ENCODE measurements at regions of chr17 and their contacts with region 1.

Region 1: GRCh38 chr17:49191917-49192741 is 18.2 kb downstream of the GNGT2 start:
- DNase-seq: peak; percentile 93
- ATAC-seq: peak; percentile 31
- H3K4me3 Mint-ChIP-seq: peak overlapping the region; percentile 90
- H3K27ac Mint-ChIP-seq: peak overlapping the region; percentile 97
- H3K4me1 Mint-ChIP-seq: peaks cover 31% of the 10 kb centered on the region
- H3K27me3 Mint-ChIP-seq: no peaks in the 10 kb centered on the region

Region 2: GRCh38 chr17:48830840-48831548 is 361.1 kb before region 1 on chr17 and contains the start of gene CALCOCO2:
- CTCF ChIA-PET with region 1: no interaction called
- POLR2A ChIA-PET with region 1: no interaction called
- intact Hi-C with region 1: loop called in 1 of 2 experiments (anchors 2 kb)
- DNase-seq: peak; percentile 95
- ATAC-seq: peak; percentile 91
- H3K4me3 Mint-ChIP-seq: peak within 1 kb of the TSS; percentile 84
- H3K27ac Mint-ChIP-seq: peak within 1 kb of the TSS; percentile 96
- H3K4me1 Mint-ChIP-seq: peaks cover 45% of the 10 kb centered on the region
- H3K27me3 Mint-ChIP-seq: no peaks in the 10 kb centered on the region
- total RNA-seq, gene CALCOCO2: 66.7 to 102 TPM

Region 3: GRCh38 chr17:49170216-49170615 is 21.9 kb before region 1 on chr17:
- CTCF ChIA-PET with region 1: no interaction called
- POLR2A ChIA-PET with region 1: no interaction called
- intact Hi-C with region 1: no loop called
- DNase-seq: no peak
- ATAC-seq: no peak
- H3K4me3 Mint-ChIP-seq: no peak overlapping the region
- H3K27ac Mint-ChIP-seq: no peak overlapping the region
- H3K4me1 Mint-ChIP-seq: no peaks in the 10 kb centered on the region
- H3K27me3 Mint-ChIP-seq: peaks cover 34% of the 10 kb centered on the region

Region 4: GRCh38 chr17:49180303-49180702 is 11.8 kb before region 1 on chr17:
- CTCF ChIA-PET with region 1: interaction called, 10 read pairs
- POLR2A ChIA-PET with region 1: no interaction called
- intact Hi-C with region 1: no loop called
- DNase-seq: peak; percentile 80
- ATAC-seq: peak; percentile 58
- H3K4me3 Mint-ChIP-seq: no peak overlapping the region
- H3K27ac Mint-ChIP-seq: no peak overlapping the region
- H3K4me1 Mint-ChIP-seq: peaks cover 4% of the 10 kb centered on the region
- H3K27me3 Mint-ChIP-seq: peaks cover 1% of the 10 kb centered on the region

Region 5: DNA sequence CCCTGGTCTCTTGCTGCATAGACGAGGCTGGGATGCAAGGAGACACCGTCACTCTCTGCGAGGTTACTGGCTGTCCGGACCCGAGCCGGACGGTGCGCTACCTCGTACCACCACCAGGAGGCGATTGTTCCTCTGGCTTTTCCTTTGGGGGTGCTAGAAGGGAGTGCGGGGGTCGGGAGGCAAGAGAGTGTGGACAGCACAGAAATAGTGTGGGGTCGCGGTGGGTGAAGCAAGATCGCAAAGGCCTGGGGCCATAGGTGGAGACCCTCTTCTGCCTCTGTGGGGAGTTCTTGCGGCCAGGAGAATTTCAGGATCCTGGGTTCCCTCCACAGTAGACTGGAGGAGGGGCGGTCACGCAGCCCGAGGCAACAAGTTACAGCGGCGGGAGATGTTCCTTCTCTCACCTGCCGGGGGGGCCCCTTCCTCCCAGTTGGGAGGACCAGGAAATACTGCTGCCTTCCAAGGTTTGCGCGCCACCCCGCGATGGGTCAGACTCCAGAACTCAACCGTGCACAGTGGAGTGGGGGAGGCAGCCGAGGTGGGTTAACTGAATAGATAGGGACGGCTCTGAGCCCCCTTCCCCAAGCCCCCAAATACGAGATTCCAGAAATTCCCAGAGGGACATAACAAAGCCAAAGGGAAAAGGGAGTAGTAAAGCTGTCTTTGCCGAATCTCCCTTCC is 31.5 kb after region 1 on chr17:
- CTCF ChIA-PET with region 1: interaction called, 36 read pairs
- POLR2A ChIA-PET with region 1: interaction called, 3 read pairs
- intact Hi-C with region 1: loop called (anchors 1 to 2 kb)
- DNase-seq: peak; percentile 82
- ATAC-seq: peak; percentile 45
- H3K4me3 Mint-ChIP-seq: peak overlapping the region; percentile 42
- H3K27ac Mint-ChIP-seq: peak overlapping the region; percentile 35
- H3K4me1 Mint-ChIP-seq: peaks cover 28% of the 10 kb centered on the region
- H3K27me3 Mint-ChIP-seq: peaks cover 14% of the 10 kb centered on the region

Region 6: DNA sequence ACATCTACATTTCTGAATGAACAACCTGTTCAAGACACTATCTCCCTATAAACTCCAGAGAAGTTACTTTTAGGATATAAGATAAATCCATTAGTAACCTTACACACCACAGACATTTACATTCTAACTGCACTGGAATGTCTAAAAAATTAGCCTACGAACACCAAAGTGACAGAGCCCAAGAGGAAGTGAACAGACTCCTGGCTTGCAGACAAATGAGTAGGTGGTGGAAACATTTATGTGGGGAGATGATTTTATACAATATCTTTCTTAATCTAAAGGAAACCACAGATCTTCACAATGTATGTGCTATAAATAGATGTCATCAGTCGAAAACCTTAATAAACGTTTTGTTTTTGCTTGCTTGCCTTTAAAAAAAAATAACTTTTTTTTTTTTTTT is 151.1 kb after region 1 on chr17:
- CTCF ChIA-PET with region 1: no interaction called
- POLR2A ChIA-PET with region 1: no interaction called
- intact Hi-C with region 1: loop called in 1 of 2 experiments (anchors 1 kb)
- DNase-seq: peak; percentile 38
- ATAC-seq: peak; percentile 70
- H3K4me3 Mint-ChIP-seq: peak overlapping the region; percentile 55
- H3K27ac Mint-ChIP-seq: peak overlapping the region; percentile 71
- H3K4me1 Mint-ChIP-seq: peaks cover 64% of the 10 kb centered on the region
- H3K27me3 Mint-ChIP-seq: peaks cover 2% of the 10 kb centered on the region

Region 7: GRCh38 chr17:49677933-49678847 is 486.1 kb after region 1 on chr17 and contains the start of gene SPOP:
- CTCF ChIA-PET with region 1: no interaction called
- POLR2A ChIA-PET with region 1: interaction called, 6 read pairs
- intact Hi-C with region 1: loop called in 1 of 2 experiments (anchors 2 kb)
- DNase-seq: peak; percentile 100
- ATAC-seq: peak; percentile 96
- H3K4me3 Mint-ChIP-seq: peak within 1 kb of the TSS; percentile 95
- H3K27ac Mint-ChIP-seq: peak within 1 kb of the TSS; percentile 96
- H3K4me1 Mint-ChIP-seq: peaks cover 39% of the 10 kb centered on the region
- H3K27me3 Mint-ChIP-seq: no peaks in the 10 kb centered on the region
- total RNA-seq, gene SPOP: 57.0 to 64.6 TPM

Region 8: DNA sequence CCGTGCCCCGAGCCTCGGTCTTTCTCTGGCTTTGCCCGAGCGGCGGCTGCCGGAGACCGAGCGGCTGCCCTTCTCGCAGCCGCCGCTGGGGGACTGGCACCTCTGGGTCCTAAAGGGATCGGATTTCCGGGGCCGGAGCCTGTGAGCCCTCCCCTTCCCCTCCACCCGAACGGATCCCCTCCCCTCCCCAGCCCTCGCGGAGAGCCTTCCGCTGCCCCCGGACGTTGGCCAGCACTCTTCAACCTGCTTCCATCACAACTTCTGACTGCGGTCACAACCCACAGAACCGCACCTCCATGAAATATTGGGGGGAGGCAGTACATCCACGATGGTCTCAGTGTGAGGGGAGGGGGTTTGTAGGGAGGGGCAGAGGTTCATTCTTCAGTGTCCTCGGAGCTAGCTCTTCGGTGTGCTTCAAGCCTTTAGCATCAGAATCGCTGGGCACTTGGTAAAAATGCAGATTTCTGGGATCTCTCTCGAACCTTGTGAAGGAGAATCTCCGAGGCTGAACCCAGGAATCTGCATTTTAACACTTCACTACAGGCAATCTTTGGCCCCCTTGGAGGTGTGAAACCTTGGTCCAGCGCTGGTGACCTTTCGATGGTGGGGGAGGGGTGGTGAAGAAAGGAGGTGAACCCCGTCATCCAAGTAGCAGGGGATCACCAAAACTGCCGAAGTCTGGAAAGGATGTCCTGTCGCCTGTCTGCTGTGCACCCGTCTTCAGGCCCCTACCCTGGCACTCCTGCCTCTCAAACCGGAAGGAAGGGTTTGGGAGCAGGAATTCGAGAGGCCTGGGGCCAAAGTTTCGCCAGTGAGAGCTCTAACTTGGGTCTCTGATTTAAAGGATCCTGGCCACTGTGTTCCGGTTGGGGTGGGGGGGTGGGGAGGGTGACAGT is 959.2 kb after region 1 on chr17:
- CTCF ChIA-PET with region 1: no interaction called
- POLR2A ChIA-PET with region 1: no interaction called
- intact Hi-C with region 1: loop called in 1 of 2 experiments (anchors 1 kb)
- DNase-seq: peak; percentile 95
- ATAC-seq: peak; percentile 66
- H3K4me3 Mint-ChIP-seq: peak overlapping the region; percentile 90
- H3K27ac Mint-ChIP-seq: peak overlapping the region; percentile 96
- H3K4me1 Mint-ChIP-seq: peaks cover 40% of the 10 kb centered on the region
- H3K27me3 Mint-ChIP-seq: no peaks in the 10 kb centered on the region